ENCODE measurements at regions of chr7 and their contacts with region 1.

Region 1: GRCh38 chr7:76327610-76328009 is 25.1 kb downstream of the HSPB1 start:
- DNase-seq: peak; percentile 98 to 100 (median 99)
- H3K4me3 ChIP-seq: peak overlapping the region in 1 of 7 experiments; percentile 34
- H3K27ac ChIP-seq: peak overlapping the region; percentile 94 to 95
- H3K4me1 ChIP-seq: peaks cover 27 to 65% (median 57%) of the 10 kb centered on the region in 4 experiments
- H3K27me3 ChIP-seq: no peaks in the 10 kb centered on the region

Region 2: GRCh38 chr7:76122516-76123239 is 204.9 kb before region 1 on chr7:
- CTCF ChIA-PET with region 1: no interaction called
- POLR2A ChIA-PET with region 1: no interaction called
- DNase-seq: peak in 2 of 3 donors; percentile 6 to 15
- H3K4me3 ChIP-seq: peak overlapping the region in 1 of 7 experiments; percentile 20
- H3K27ac ChIP-seq: no peak overlapping the region
- H3K4me1 ChIP-seq: peaks cover 0 to 7% (median 4%) of the 10 kb centered on the region in 4 experiments
- H3K27me3 ChIP-seq: no peaks in the 10 kb centered on the region

Region 3: DNA sequence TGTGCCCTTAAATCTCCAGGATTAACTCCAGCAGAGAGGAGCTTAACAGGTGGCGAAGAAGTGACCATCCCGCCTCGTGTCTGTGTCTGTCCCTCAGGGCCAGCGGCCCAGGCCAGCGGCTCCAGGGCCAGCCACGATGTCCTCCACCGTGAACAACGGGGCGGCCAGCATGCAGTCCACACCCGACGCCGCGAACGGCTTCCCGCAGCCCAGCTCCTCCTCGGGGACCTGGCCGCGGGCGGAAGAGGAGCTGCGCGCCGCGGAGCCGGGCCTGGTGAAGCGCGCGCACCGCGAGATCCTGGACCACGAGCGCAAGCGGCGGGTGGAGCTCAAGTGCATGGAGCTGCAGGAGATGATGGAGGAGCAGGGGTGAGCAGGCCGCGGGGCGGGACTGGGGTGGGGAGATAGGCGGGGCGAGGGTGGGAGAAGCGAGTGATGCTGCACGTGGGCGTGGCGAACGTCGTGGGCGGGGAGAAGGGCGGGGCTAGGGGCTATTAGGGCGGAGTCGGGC is 92.6 kb before region 1 on chr7:
- CTCF ChIA-PET with region 1: no interaction called
- POLR2A ChIA-PET with region 1: no interaction called
- DNase-seq: peak; percentile 79 to 86 (median 85)
- H3K4me3 ChIP-seq: peak overlapping the region in 2 of 7 experiments; percentile 50 to 54
- H3K27ac ChIP-seq: no peak overlapping the region
- H3K4me1 ChIP-seq: peaks cover 0 to 5% (median 2%) of the 10 kb centered on the region in 4 experiments
- H3K27me3 ChIP-seq: peaks cover 0 to 71% (median 14%) of the 10 kb centered on the region in 5 experiments

Region 4: GRCh38 chr7:76297387-76297756 is 30.2 kb before region 1 on chr7:
- CTCF ChIA-PET with region 1: no interaction called
- POLR2A ChIA-PET with region 1: no interaction called
- DNase-seq: no peak
- H3K4me3 ChIP-seq: no peak overlapping the region
- H3K27ac ChIP-seq: no peak overlapping the region
- H3K4me1 ChIP-seq: peaks cover 0 to 35% (median 27%) of the 10 kb centered on the region in 4 experiments
- H3K27me3 ChIP-seq: no peaks in the 10 kb centered on the region

Region 5: GRCh38 chr7:76352193-76352592 is 24.6 kb after region 1 on chr7:
- CTCF ChIA-PET with region 1: interaction called, 74 read pairs
- POLR2A ChIA-PET with region 1: no interaction called
- DNase-seq: no peak
- H3K4me3 ChIP-seq: no peak overlapping the region
- H3K27ac ChIP-seq: no peak overlapping the region
- H3K4me1 ChIP-seq: peaks cover 5 to 13% (median 11%) of the 10 kb centered on the region in 4 experiments
- H3K27me3 ChIP-seq: no peaks in the 10 kb centered on the region

Region 6: GRCh38 chr7:76359111-76359978 is 31.7 kb after region 1 on chr7:
- CTCF ChIA-PET with region 1: interaction called, 74 read pairs
- POLR2A ChIA-PET with region 1: interaction called, 32 read pairs
- DNase-seq: peak; percentile 99
- H3K4me3 ChIP-seq: peak overlapping the region; percentile 90 to 98 (median 97)
- H3K27ac ChIP-seq: peak overlapping the region; percentile 94 to 98
- H3K4me1 ChIP-seq: peaks cover 9 to 40% (median 29%) of the 10 kb centered on the region in 4 experiments
- H3K27me3 ChIP-seq: no peaks in the 10 kb centered on the region

Region 7: DNA sequence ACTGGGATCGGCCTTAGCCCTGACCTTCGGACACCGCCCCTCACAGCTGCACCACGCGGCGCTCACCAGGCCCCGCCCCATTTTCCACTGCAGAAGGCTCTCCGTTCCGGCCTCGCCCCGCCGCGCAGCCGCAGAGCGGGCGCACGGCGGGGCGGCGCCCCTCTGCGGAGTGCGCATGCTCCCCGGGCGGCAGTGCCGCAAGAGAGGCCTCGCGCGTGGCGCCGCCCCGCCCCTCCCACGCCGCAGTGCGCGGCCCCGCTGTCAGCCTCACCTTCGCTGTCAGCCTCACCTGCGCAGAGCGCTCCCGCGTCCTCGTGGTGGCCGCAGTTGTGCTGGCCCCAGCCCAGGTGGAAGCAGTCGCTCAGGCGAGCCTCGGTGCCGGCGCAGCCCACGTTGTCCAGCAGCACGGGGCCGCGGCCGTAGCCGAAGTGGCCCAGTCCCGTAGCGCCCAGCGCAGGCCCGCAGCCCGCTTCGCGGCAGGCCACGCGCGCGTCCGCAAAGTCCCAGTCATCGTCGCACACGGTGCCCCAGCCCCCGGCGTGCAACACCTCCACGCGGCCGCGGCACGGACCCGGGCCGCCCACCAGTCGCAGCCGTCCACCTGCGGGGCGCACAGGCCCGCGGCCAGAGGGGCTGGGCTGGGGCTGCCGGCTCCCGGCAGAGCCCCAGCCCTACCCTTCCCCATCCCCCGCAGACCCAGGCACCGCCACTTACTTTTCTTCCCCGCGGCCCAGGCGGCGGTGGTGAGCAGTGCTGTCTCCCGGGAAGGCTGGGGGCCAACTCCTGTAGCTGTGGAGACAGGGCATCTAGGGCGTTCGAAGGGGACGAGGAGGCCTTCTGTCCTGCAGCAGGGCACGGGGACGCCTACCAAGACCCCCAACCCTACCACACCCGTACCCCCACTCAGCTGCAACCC is 65.8 kb after region 1 on chr7:
- CTCF ChIA-PET with region 1: no interaction called
- POLR2A ChIA-PET with region 1: no interaction called
- DNase-seq: peak; percentile 74 to 80 (median 77)
- H3K4me3 ChIP-seq: peak overlapping the region; percentile 37 to 78 (median 71)
- H3K27ac ChIP-seq: peak overlapping the region in 1 of 2 experiments; percentile 54
- H3K4me1 ChIP-seq: peaks cover 2 to 39% (median 35%) of the 10 kb centered on the region in 4 experiments
- H3K27me3 ChIP-seq: no peaks in the 10 kb centered on the region

Measured in common myeloid progenitor, CD34-positive (primary cell).